Spleen (tissue), 13 donors: ENCODE measurements at regions of chr7 and their contacts with region 1.

Region 1: GRCh38 chr7:64665980-64666662 is at the start of gene ZNF107:
- DNase-seq: peak; percentile 96
- H3K4me3 ChIP-seq: peak within 1 kb of the TSS; percentile 65 to 83 (median 78)
- H3K27ac ChIP-seq: peak within 1 kb of the TSS; percentile 65 to 91 (median 88)
- H3K4me1 ChIP-seq: peaks cover 24 to 65% (median 38%) of the 10 kb centered on the region in 6 donors
- H3K27me3 ChIP-seq: no peaks in the 10 kb centered on the region
- CTCF ChIP-seq: no peak
- POLR2A ChIP-seq: peak in 2 of 3 donors; percentile 4 to 24
- total RNA-seq, gene ZNF107: 16.4 to 52.5 (median 19.4) TPM

Region 2: DNA sequence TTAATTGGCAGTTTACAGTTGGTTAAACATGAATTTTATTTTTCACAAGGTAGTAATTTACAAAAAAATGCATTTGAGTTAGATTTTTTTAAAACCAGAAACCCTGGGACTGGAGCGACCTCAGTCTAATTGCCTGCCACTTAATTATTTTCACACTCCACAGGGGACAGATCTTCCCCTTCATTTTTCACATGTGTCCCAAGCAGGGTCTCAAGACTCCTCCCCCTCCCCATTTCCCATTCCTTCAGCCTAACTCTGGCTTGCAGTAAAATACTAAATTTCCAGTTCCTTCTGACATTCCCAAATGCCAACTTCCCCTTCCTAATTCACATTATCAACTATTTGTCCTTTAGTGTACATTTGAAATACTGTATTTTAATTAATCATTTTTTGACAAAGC is 129.1 kb after region 1 on chr7:
- intact Hi-C with region 1: loop called (anchors 5 kb)
- DNase-seq: no peak
- H3K4me3 ChIP-seq: peak overlapping the region in 7 of 8 donors; percentile 75 to 82 (median 79)
- H3K27ac ChIP-seq: no peak overlapping the region
- H3K4me1 ChIP-seq: peaks cover 8 to 38% (median 22%) of the 10 kb centered on the region in 6 donors
- H3K27me3 ChIP-seq: no peaks in the 10 kb centered on the region
- CTCF ChIP-seq: no peak
- POLR2A ChIP-seq: no peak